ENCODE measurements at regions of chr1 and their contacts with region 1.

Region 1: GRCh38 chr1:37989361-37989930 is 376 bp downstream of the SF3A3 start:
- DNase-seq: peak in 2 of 5 donors; percentile 42 to 64
- ATAC-seq: peak; percentile 8 to 50 (median 42)
- H3K4me3 ChIP-seq: peak overlapping the region; percentile 66 to 98 (median 76)
- H3K27ac ChIP-seq: peak overlapping the region; percentile 27 to 92 (median 79)
- H3K4me1 ChIP-seq: peaks cover 0 to 25% (median 14%) of the 10 kb centered on the region in 12 donors
- H3K27me3 ChIP-seq: no peaks in the 10 kb centered on the region
- CTCF ChIP-seq: no peak
- POLR2A ChIP-seq: no peak

Region 2: DNA sequence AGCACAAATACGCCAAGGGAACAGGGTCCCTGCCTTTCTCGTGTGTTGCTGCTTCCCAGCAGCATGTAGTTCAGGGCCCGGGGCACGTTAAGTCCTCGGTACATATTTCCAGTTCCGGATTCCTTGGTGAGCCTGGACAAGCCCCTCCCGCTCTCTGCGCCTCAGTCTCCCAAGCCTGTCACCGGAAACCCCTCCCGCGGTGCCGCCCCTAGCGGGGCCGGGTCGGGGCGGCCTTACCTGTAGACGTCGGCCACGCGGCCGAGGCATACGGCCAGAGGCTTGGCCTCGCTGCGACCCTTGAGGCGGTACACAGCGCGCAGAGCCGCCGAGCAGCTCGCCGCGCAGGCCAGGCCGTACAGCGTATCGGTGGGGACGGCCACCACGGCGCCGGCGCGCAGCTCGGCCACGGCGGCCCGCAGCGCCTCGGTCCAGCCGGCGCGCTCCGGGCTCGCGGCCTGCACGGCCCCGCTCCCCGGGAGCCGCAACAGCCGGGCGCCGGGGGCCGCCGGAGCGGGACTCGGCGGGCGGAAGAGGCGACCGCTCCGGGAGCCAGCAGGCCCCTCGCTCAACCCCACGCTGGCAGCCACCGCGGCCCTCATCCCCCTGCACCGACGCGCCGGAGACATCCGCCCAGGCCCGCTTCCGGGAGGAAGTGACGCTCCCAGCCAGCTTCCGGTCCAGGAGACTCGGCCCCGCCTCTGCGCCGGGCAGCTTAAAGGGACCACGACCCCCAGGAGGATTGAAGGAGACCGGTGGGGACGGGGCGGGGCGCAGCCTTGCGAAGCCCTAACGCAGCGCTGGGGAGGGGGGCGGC is 181.7 kb before region 1 on chr1 and contains the starts of genes C1orf122 and YRDC:
- intact Hi-C with region 1: loop called in 1 of 10 experiments (anchors 10 kb)
- DNase-seq: peak; percentile 94 to 97 (median 96)
- ATAC-seq: peak; percentile 91 to 96 (median 96)
- H3K4me3 ChIP-seq: peak within 1 kb of the TSS; percentile 72 to 99 (median 91)
- H3K27ac ChIP-seq: peak within 1 kb of the TSS; percentile 90 to 99 (median 96)
- H3K4me1 ChIP-seq: peaks cover 8 to 41% (median 28%) of the 10 kb centered on the region in 12 donors
- H3K27me3 ChIP-seq: no peaks in the 10 kb centered on the region
- CTCF ChIP-seq: no peak
- POLR2A ChIP-seq: peak in 1 of 2 donors; percentile 72
- total RNA-seq, gene C1orf122: 29.1 to 93.0 (median 44.0) TPM
- total RNA-seq, gene YRDC: 4.0 to 8.9 (median 6.1) TPM

Region 3: GRCh38 chr1:37883671-37884070 is 105.8 kb before region 1 on chr1:
- intact Hi-C with region 1: loop called in 1 of 10 experiments (anchors 10 kb)
- DNase-seq: no peak
- ATAC-seq: no peak
- H3K4me3 ChIP-seq: no peak overlapping the region
- H3K27ac ChIP-seq: no peak overlapping the region
- H3K4me1 ChIP-seq: no peaks in the 10 kb centered on the region
- H3K27me3 ChIP-seq: no peaks in the 10 kb centered on the region
- CTCF ChIP-seq: no peak
- POLR2A ChIP-seq: no peak

Region 4: DNA sequence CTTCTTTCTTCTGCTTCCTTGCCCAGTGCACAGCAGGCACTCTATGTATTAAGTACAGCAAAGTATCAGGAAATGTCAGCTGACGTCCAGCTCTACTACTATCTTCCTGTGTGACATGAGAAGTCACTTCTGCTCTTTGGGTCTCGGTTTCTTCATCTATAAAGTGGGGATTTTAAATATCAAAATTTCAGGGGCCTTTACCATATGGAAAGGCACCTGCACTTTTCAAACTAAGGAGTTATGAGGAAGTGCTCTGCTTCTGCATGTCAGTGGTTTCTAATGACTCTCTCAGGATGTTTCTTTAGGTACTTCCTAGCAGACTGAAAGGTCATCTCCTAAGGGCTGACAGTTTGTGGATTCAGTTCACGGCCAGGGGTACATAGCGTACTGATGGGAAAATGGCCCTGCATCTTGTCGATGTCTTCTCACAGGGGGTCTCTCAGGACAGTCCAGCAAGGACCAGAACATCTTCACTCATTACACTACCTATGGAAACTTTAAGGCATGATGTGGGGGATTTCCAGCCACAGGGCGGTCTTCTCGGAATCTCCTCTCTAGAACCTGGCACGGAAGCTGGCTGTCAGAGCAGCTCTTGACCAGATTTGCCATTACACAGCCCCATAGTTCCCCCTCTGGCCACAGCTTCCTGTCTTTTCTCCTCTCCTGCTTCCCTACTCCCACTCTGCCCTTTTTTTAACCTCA is 88.1 kb before region 1 on chr1:
- intact Hi-C with region 1: no loop called
- DNase-seq: no peak
- ATAC-seq: no peak
- H3K4me3 ChIP-seq: no peak overlapping the region
- H3K27ac ChIP-seq: peak overlapping the region in 1 of 12 donors; percentile 29
- H3K4me1 ChIP-seq: peaks cover 0 to 9% (median 0%) of the 10 kb centered on the region in 12 donors
- H3K27me3 ChIP-seq: no peaks in the 10 kb centered on the region
- CTCF ChIP-seq: no peak
- POLR2A ChIP-seq: no peak

Region 5: DNA sequence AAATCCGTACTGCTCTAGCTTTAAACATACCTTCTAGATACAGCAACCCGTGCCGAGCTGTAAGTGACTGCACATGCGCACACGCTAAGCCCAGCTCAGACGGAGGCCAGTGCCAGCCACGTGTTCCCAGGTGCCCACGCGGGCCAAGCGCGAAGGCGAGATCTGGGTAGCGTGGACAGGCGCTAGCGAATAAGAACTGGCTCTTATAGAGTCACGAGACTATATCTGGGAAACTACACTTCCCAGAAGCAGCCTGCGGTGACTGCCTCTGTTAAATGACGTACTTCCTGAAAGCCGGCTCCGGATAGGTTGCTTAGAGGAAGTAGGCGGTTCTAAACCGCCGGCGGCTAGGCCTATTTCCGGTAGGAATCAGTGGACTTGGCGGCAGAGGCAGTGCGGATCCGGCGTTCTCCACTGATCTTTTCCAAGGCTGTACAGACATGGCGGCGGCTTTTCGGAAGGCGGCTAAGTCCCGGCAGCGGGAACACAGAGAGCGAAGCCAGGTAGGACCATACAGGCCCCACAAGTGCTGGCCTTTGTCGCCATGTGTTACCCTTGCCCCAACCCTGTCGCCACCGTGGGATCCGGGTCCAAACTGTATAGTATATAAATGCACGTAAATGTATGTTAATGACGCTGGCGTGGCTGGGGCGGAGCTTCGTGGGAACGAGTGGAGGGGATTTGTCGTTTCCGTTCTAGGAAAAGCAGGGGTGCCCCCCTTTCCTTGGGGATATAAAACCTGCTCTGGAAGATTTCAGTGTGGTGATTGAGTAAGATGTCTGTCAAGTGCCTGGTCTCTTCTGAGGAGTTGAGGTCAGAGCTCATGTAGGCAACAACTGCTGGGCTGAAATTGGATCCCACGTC is 23.1 kb after region 1 on chr1 and contains the start of gene UTP11:
- intact Hi-C with region 1: loop called in 4 of 10 experiments (anchors 1 to 2 kb)
- DNase-seq: peak; percentile 93 to 96 (median 95)
- ATAC-seq: peak; percentile 96 to 98 (median 98)
- H3K4me3 ChIP-seq: peak within 1 kb of the TSS; percentile 64 to 95 (median 74)
- H3K27ac ChIP-seq: peak within 1 kb of the TSS; percentile 84 to 96 (median 92)
- H3K4me1 ChIP-seq: peaks cover 4 to 69% (median 44%) of the 10 kb centered on the region in 12 donors
- H3K27me3 ChIP-seq: no peaks in the 10 kb centered on the region
- CTCF ChIP-seq: no peak
- POLR2A ChIP-seq: peak in 1 of 2 donors; percentile 92
- total RNA-seq, gene UTP11: 30.7 to 43.7 (median 36.5) TPM

Region 6: DNA sequence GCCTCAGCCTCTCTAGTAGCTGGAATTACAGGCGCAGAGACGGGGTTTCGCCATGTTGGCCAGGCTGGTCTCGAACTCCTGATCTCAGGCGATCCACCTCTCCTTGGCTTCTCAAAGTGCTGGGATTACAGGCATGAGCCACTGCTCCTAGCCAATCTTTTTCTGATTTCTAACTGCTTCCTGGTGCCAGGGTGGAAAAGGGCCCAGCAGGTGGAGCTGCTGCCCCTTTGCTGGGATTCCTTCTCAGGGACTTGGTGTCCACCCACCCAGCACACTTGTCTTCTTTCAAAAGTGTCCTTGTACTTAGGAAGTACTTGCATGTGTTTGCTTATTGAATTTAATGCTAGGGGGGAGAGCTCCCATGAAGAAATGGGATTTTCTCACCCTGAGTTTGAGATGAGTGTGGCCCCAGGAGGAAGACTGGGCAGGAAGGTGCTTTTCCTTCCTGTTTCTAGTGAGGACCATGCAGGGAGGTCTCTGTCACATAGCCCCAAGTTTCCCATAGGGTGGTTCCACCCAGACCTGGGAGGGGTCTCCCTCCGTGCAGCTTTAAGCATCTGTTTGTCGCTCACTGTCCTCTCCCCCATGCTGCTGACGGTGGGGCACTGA is 37.2 kb after region 1 on chr1:
- intact Hi-C with region 1: loop called in 1 of 10 experiments (anchors 1 kb)
- DNase-seq: no peak
- ATAC-seq: no peak
- H3K4me3 ChIP-seq: no peak overlapping the region
- H3K27ac ChIP-seq: no peak overlapping the region
- H3K4me1 ChIP-seq: peaks cover 0 to 40% (median 21%) of the 10 kb centered on the region in 12 donors
- H3K27me3 ChIP-seq: no peaks in the 10 kb centered on the region
- CTCF ChIP-seq: peak; percentile 37 to 63 (median 51)
- POLR2A ChIP-seq: no peak

Region 7: GRCh38 chr1:38269923-38270848 is 280.7 kb after region 1 on chr1:
- intact Hi-C with region 1: no loop called
- DNase-seq: no peak
- ATAC-seq: no peak
- H3K4me3 ChIP-seq: no peak overlapping the region
- H3K27ac ChIP-seq: no peak overlapping the region
- H3K4me1 ChIP-seq: no peaks in the 10 kb centered on the region
- H3K27me3 ChIP-seq: peaks cover 0 to 40% (median 12%) of the 10 kb centered on the region in 9 donors
- CTCF ChIP-seq: no peak
- POLR2A ChIP-seq: no peak